Stomach (tissue), 19 donors: ENCODE measurements at regions of chr7 and their contacts with region 1.

Region 1: GRCh38 chr7:111741811-111742240 is 179.5 kb upstream of the IMMP2L start:
- DNase-seq: peak; percentile 69 to 88
- H3K4me3 ChIP-seq: no peak overlapping the region
- H3K27ac ChIP-seq: no peak overlapping the region
- H3K4me1 ChIP-seq: peaks cover 0 to 15% (median 0%) of the 10 kb centered on the region in 4 donors
- H3K27me3 ChIP-seq: no peaks in the 10 kb centered on the region
- CTCF ChIP-seq: peak in 5 of 7 experiments; percentile 42 to 62 (median 55)
- EP300 ChIP-seq: no peak
- POLR2A ChIP-seq: no peak

Region 2: GRCh38 chr7:111517549-111517951 is 224.3 kb before region 1 on chr7:
- intact Hi-C with region 1: no loop called
- DNase-seq: peak in 1 of 2 donors; percentile 30
- H3K4me3 ChIP-seq: no peak overlapping the region
- H3K27ac ChIP-seq: no peak overlapping the region
- H3K4me1 ChIP-seq: peaks cover 0 to 11% (median 0%) of the 10 kb centered on the region in 4 donors
- H3K27me3 ChIP-seq: no peaks in the 10 kb centered on the region
- CTCF ChIP-seq: no peak
- EP300 ChIP-seq: no peak
- POLR2A ChIP-seq: no peak

Region 3: DNA sequence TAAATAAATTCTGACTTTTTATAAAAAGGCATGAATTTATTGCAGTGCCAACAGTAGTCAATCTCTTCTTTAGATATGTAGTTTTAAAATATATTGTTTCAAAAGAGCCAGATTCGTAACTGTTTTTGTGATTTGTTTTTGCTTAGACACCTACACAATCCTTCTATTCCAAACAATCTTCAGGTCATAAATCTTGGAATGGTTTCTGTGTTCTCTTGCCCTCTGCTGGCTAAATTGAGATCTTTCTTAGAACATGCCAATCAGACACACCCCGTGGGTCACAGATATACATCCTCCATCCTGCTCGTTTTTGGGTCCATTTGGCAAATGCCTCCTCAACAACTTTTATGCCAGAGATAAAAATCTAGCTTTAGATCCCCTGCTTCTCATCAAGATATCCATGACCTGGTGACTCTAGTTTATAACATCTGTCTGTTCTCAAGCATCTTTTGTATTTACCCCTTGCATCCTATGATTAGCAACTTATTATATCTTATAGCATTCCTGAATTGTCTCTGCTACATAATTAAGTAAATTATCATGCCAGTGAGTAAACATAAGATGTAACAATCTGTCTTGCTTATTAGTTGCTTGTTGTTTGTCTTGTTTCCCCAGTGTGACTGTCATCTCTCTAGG is 673.1 kb after region 1 on chr7:
- intact Hi-C with region 1: loop called (anchors 10 kb)
- DNase-seq: peak in 1 of 2 donors; percentile 59
- H3K4me3 ChIP-seq: no peak overlapping the region
- H3K27ac ChIP-seq: no peak overlapping the region
- H3K4me1 ChIP-seq: peaks cover 0 to 10% (median 4%) of the 10 kb centered on the region in 4 donors
- H3K27me3 ChIP-seq: no peaks in the 10 kb centered on the region
- CTCF ChIP-seq: peak in 4 of 7 experiments; percentile 32 to 42 (median 34)
- EP300 ChIP-seq: no peak
- POLR2A ChIP-seq: no peak

Region 4: DNA sequence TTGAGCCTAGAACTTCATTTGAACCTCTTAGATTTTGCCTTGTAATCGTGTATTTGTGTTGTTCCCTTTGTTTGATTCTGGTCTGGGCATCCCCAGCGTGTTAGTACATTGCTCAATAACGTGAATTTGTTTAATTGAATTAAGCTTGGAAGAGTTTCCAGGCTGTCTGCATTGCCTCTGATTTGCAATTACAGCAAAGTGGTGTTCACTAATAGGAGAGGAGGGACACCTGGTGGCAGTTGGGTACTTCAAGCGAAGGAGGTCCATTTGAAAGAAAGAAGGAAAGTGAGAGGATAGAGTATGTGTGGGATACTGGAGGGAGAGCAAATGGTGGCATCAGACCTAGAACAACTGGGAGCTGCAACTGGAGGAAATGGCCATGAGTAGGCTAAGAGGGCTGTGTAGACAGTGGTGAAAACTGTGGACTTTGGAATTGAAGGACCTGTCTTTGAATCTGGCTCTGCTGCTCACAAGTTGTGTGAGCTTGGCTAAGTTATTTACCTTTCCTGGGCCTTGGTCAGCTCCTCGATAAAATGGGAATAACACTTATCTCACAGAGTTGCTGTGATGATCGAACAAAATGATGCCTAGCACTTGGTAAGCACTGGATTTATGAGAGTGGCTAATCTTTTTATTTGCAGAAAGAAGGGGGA is 754.1 kb after region 1 on chr7:
- intact Hi-C with region 1: loop called (anchors 10 kb)
- DNase-seq: peak; percentile 67 to 86
- H3K4me3 ChIP-seq: no peak overlapping the region
- H3K27ac ChIP-seq: no peak overlapping the region
- H3K4me1 ChIP-seq: peaks cover 0 to 9% (median 0%) of the 10 kb centered on the region in 4 donors
- H3K27me3 ChIP-seq: no peaks in the 10 kb centered on the region
- CTCF ChIP-seq: peak in 5 of 7 experiments; percentile 34 to 87 (median 55)
- EP300 ChIP-seq: no peak
- POLR2A ChIP-seq: no peak